ENCODE measurements at regions of chr5 and their contacts with region 1.

Region 1: GRCh38 chr5:91977579-91977978 is 594.5 kb upstream of the ARRDC3 start:
- DNase-seq: no peak
- H3K4me3 ChIP-seq: no peak overlapping the region
- H3K27ac ChIP-seq: no peak overlapping the region
- H3K27me3 ChIP-seq: no peaks in the 10 kb centered on the region
- CTCF ChIP-seq: no peak

Region 2: GRCh38 chr5:91963166-91963565 is 14.4 kb before region 1 on chr5:
- intact Hi-C with region 1: loop called in 1 of 2 experiments (anchors 2 kb)
- DNase-seq: no peak
- H3K4me3 ChIP-seq: no peak overlapping the region
- H3K27ac ChIP-seq: no peak overlapping the region
- H3K27me3 ChIP-seq: no peaks in the 10 kb centered on the region
- CTCF ChIP-seq: no peak